ENCODE measurements at regions of chr3 and their contacts with region 1.

Region 1: DNA sequence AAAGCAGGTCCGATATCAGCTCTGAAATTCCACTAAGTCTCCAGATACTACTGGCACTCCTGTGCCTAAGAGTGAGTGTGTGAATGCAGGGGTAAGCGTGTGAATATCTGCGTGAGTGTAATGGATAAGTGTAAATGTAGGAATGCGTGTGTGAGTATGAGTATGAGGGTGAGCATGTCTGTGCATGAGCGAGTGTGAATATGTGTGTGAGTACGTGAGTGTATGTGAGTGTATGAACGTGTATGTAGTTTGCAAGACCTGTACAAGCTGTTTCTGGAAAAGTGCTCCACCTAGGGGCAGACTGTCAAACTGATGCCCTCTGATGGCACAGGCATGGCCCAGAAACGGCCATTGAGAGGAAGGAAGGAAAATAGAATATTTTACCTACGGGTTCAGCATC is 24.4 kb upstream of the FRMD4B start:
- DNase-seq: peak; percentile 81
- H3K4me3 Mint-ChIP-seq: no peak overlapping the region
- H3K27ac Mint-ChIP-seq: no peak overlapping the region
- H3K4me1 Mint-ChIP-seq: peaks cover 4% of the 10 kb centered on the region
- H3K27me3 Mint-ChIP-seq: peaks cover 3% of the 10 kb centered on the region

Region 2: DNA sequence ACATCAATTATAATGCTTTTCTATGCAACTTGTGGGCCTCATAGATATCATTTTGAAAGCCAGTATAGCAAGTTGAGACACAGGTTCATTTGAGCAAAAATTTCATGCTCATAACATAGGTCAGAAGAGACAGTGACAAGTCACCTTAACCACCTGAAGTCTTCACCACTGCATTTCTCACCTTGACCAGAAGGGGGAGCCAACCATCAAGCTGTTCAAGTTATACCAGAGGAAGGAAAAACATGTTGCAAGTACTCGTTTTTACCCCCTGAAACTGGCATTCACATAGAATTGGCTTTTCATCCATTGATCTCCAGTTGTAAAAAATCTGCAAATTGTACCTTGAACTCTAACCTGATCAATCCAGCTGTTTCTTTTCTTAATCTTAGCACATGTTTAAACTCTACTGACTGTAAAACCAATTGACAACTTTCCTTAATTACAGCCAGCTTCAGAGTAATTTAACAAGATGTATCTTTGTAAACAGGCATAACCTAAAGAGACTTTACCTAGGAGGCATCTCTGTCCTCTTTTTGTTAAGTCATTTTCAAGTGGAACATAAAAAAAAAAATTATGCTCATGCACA is 289.3 kb before region 1 on chr3:
- CTCF ChIA-PET with region 1: interaction called, 39 read pairs
- POLR2A ChIA-PET with region 1: no interaction called
- intact Hi-C with region 1: loop called (anchors 1 kb)
- DNase-seq: peak; percentile 88
- H3K4me3 Mint-ChIP-seq: no peak overlapping the region
- H3K27ac Mint-ChIP-seq: no peak overlapping the region
- H3K4me1 Mint-ChIP-seq: peaks cover 5% of the 10 kb centered on the region
- H3K27me3 Mint-ChIP-seq: no peaks in the 10 kb centered on the region

Region 3: GRCh38 chr3:69324362-69325025 is 85.8 kb before region 1 on chr3:
- CTCF ChIA-PET with region 1: interaction called, 10 read pairs
- POLR2A ChIA-PET with region 1: no interaction called
- intact Hi-C with region 1: loop called (anchors 1 kb)
- DNase-seq: no peak
- H3K4me3 Mint-ChIP-seq: no peak overlapping the region
- H3K27ac Mint-ChIP-seq: no peak overlapping the region
- H3K4me1 Mint-ChIP-seq: peaks cover 47% of the 10 kb centered on the region
- H3K27me3 Mint-ChIP-seq: no peaks in the 10 kb centered on the region

Region 4: GRCh38 chr3:69339760-69340159 is 70.5 kb before region 1 on chr3:
- CTCF ChIA-PET with region 1: no interaction called
- POLR2A ChIA-PET with region 1: no interaction called
- intact Hi-C with region 1: no loop called
- DNase-seq: no peak
- H3K4me3 Mint-ChIP-seq: no peak overlapping the region
- H3K27ac Mint-ChIP-seq: no peak overlapping the region
- H3K4me1 Mint-ChIP-seq: no peaks in the 10 kb centered on the region
- H3K27me3 Mint-ChIP-seq: peaks cover 2% of the 10 kb centered on the region

Region 5: GRCh38 chr3:69385723-69386555 is 24.3 kb before region 1 on chr3 and contains the start of gene FRMD4B:
- CTCF ChIA-PET with region 1: interaction called, 11 read pairs
- POLR2A ChIA-PET with region 1: no interaction called
- intact Hi-C with region 1: no loop called
- DNase-seq: peak; percentile 54
- H3K4me3 Mint-ChIP-seq: peak within 1 kb of the TSS; percentile 58
- H3K27ac Mint-ChIP-seq: no peak within 1 kb of the TSS
- H3K4me1 Mint-ChIP-seq: peaks cover 10% of the 10 kb centered on the region
- H3K27me3 Mint-ChIP-seq: peaks cover 53% of the 10 kb centered on the region
- total RNA-seq, gene FRMD4B: 29.1 to 32.8 TPM

Region 6: DNA sequence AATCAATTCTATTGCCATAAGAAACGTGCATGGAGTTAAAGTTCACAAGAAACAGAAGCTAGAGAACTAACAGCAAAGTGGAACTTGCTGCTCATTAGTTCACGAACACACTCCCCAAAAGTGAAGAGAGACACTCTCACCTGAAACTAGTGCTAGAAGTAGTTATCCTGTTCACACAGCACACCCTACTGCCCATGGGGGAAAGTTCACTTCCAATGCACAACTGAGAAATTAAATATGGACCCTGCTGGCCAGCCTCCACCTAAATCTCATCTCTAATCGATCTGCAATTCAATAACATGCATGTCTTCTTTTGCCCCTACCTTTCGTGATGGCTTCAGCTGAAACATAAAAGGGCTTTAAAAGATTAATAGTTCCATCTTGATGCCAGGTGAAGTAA is 15.0 kb after region 1 on chr3:
- CTCF ChIA-PET with region 1: interaction called, 45 read pairs
- POLR2A ChIA-PET with region 1: no interaction called
- intact Hi-C with region 1: no loop called
- DNase-seq: peak; percentile 57
- H3K4me3 Mint-ChIP-seq: no peak overlapping the region
- H3K27ac Mint-ChIP-seq: no peak overlapping the region
- H3K4me1 Mint-ChIP-seq: peaks cover 2% of the 10 kb centered on the region
- H3K27me3 Mint-ChIP-seq: peaks cover 2% of the 10 kb centered on the region

Region 7: GRCh38 chr3:69439643-69440270 is 29.5 kb after region 1 on chr3:
- CTCF ChIA-PET with region 1: interaction called, 18 read pairs
- POLR2A ChIA-PET with region 1: no interaction called
- intact Hi-C with region 1: no loop called
- DNase-seq: peak; percentile 15
- H3K4me3 Mint-ChIP-seq: no peak overlapping the region
- H3K27ac Mint-ChIP-seq: no peak overlapping the region
- H3K4me1 Mint-ChIP-seq: peaks cover 47% of the 10 kb centered on the region
- H3K27me3 Mint-ChIP-seq: no peaks in the 10 kb centered on the region

Measured in activated CD4-positive, alpha-beta memory T cell treated with anti-CD3 and anti-CD28 coated beads for 36 hours (primary cell).